ENCODE measurements at regions of chr10 and their contacts with region 1.

Region 1: GRCh38 chr10:79195091-79195923 is 126.5 kb downstream of the ZMIZ1 start:
- DNase-seq: peak; percentile 88
- ATAC-seq: peak; percentile 76
- H3K4me3 Mint-ChIP-seq: no peak overlapping the region
- H3K27ac Mint-ChIP-seq: no peak overlapping the region
- H3K4me1 Mint-ChIP-seq: peaks cover 12% of the 10 kb centered on the region
- H3K27me3 Mint-ChIP-seq: no peaks in the 10 kb centered on the region
- CTCF ChIP-seq: peak; percentile 95

Region 2: GRCh38 chr10:79068562-79069324 is 126.6 kb before region 1 on chr10 and contains the start of gene ZMIZ1:
- CTCF ChIA-PET with region 1: interaction called, 23 read pairs
- POLR2A ChIA-PET with region 1: interaction called, 6 read pairs
- DNase-seq: peak; percentile 84
- ATAC-seq: peak; percentile 25
- H3K4me3 Mint-ChIP-seq: peak within 1 kb of the TSS; percentile 91
- H3K27ac Mint-ChIP-seq: peak within 1 kb of the TSS; percentile 76
- H3K4me1 Mint-ChIP-seq: peaks cover 40% of the 10 kb centered on the region
- H3K27me3 Mint-ChIP-seq: peaks cover 13% of the 10 kb centered on the region; the same call in 1 of the 2 replicates
- CTCF ChIP-seq: 0 out of 2 replicates have a peak, but pooled peaks have one; percentile 9
- total RNA-seq, gene ZMIZ1: 34.3 to 44.4 TPM (median 35.2 TPM) in 3 replicates

Region 3: GRCh38 chr10:79101560-79102497 is 93.5 kb before region 1 on chr10:
- CTCF ChIA-PET with region 1: interaction called, 12 read pairs
- POLR2A ChIA-PET with region 1: no interaction called
- DNase-seq: no peak
- ATAC-seq: peak; percentile 61
- H3K4me3 Mint-ChIP-seq: no peak overlapping the region
- H3K27ac Mint-ChIP-seq: peak overlapping the region; percentile 84
- H3K4me1 Mint-ChIP-seq: peaks cover 74% of the 10 kb centered on the region
- H3K27me3 Mint-ChIP-seq: no peaks in the 10 kb centered on the region
- CTCF ChIP-seq: no peak

Region 4: GRCh38 chr10:79142064-79142491 is 53.2 kb before region 1 on chr10:
- CTCF ChIA-PET with region 1: interaction called, 22 read pairs
- POLR2A ChIA-PET with region 1: no interaction called
- DNase-seq: no peak
- ATAC-seq: no peak
- H3K4me3 Mint-ChIP-seq: no peak overlapping the region
- H3K27ac Mint-ChIP-seq: peak overlapping the region; percentile 69
- H3K4me1 Mint-ChIP-seq: peaks cover 66% of the 10 kb centered on the region
- H3K27me3 Mint-ChIP-seq: no peaks in the 10 kb centered on the region
- CTCF ChIP-seq: no peak

Region 5: DNA sequence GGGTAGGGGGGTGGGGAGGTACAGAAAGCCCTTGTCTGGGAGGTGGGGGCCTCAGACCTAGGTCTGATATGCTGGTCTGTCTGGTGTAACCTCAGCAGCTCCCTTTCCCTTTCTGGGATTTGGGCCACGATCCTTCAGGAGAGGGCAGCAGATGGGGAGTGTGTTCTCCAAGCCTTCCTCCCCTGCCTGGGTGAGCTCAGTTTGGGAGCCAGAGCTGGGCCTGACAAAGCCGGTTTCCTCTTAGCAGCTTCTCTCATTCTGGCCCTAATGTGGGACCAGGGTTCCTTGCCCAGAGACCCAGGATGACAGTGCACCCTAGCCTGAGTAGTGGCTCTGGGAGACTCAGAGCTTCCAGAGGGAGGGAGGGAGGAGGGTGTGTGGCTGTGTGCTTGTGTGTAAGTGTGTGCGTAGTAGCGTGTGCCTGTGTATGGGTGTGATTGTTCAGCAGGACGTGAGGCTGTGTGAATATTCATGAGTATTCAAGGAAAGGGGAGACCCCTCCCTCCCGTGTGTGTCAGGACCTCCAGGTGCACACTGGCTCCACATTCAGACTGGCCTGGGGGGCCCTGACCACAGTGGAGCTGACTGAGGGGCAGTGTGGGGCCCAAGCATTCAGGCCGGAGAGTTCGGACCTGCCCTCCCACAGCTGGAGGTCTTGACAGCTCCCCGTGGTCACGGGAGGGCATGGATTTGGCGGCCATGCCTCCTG is 30.1 kb before region 1 on chr10:
- CTCF ChIA-PET with region 1: interaction called, 10 read pairs
- POLR2A ChIA-PET with region 1: no interaction called
- DNase-seq: no peak
- ATAC-seq: no peak
- H3K4me3 Mint-ChIP-seq: no peak overlapping the region
- H3K27ac Mint-ChIP-seq: peak overlapping the region; percentile 47; the same call in 1 of the 2 replicates
- H3K4me1 Mint-ChIP-seq: peaks cover 35% of the 10 kb centered on the region
- H3K27me3 Mint-ChIP-seq: no peaks in the 10 kb centered on the region
- CTCF ChIP-seq: no peak

Region 6: GRCh38 chr10:79215531-79215930 is 20.2 kb after region 1 on chr10:
- CTCF ChIA-PET with region 1: no interaction called
- POLR2A ChIA-PET with region 1: no interaction called
- DNase-seq: no peak
- ATAC-seq: no peak
- H3K4me3 Mint-ChIP-seq: no peak overlapping the region
- H3K27ac Mint-ChIP-seq: no peak overlapping the region
- H3K4me1 Mint-ChIP-seq: peaks cover 4% of the 10 kb centered on the region
- H3K27me3 Mint-ChIP-seq: no peaks in the 10 kb centered on the region
- CTCF ChIP-seq: no peak

Region 7: GRCh38 chr10:79298403-79299244 is 103.3 kb after region 1 on chr10:
- CTCF ChIA-PET with region 1: no interaction called
- POLR2A ChIA-PET with region 1: no interaction called
- DNase-seq: no peak
- ATAC-seq: no peak
- H3K4me3 Mint-ChIP-seq: no peak overlapping the region
- H3K27ac Mint-ChIP-seq: no peak overlapping the region
- H3K4me1 Mint-ChIP-seq: no peaks in the 10 kb centered on the region
- H3K27me3 Mint-ChIP-seq: no peaks in the 10 kb centered on the region
- CTCF ChIP-seq: no peak

Region 8: DNA sequence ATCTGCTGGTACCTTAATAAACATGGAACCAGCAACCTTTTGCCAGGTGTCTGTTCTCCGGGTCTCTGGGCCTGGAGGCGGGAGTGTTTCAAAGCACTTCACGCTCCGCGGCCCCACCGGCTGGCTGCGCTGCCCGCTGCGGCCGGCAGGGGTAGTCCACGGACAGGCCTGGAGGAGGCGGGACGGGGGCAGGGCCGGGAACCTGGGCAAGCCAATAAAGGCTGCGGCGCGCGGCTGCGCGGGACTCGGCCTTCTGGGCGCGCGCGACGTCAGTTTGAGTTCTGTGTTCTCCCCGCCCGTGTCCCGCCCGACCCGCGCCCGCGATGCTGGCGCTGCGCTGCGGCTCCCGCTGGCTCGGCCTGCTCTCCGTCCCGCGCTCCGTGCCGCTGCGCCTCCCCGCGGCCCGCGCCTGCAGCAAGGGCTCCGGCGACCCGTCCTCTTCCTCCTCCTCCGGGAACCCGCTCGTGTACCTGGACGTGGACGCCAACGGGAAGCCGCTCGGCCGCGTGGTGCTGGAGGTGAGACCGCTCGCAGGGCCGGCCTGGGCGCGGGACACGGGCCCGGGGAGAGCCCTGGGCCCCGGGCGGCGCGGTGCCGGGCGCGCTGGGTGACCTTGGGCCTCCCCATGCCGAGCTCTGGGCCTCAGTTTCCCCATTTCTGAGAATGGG is 152.1 kb after region 1 on chr10 and contains the start of gene PPIF:
- CTCF ChIA-PET with region 1: no interaction called
- POLR2A ChIA-PET with region 1: no interaction called
- DNase-seq: peak; percentile 96
- ATAC-seq: peak; percentile 88
- H3K4me3 Mint-ChIP-seq: peak within 1 kb of the TSS; percentile 65
- H3K27ac Mint-ChIP-seq: no peak within 1 kb of the TSS
- H3K4me1 Mint-ChIP-seq: peaks cover 8% of the 10 kb centered on the region
- H3K27me3 Mint-ChIP-seq: no peaks in the 10 kb centered on the region
- CTCF ChIP-seq: peak; percentile 95
- total RNA-seq, gene PPIF: 80.9 to 91.4 TPM (median 89.9 TPM) in 3 replicates

Measured in WTC11 (cell line).